Dorsolateral prefrontal cortex (tissue), 120 donors: ENCODE measurements at regions of chr3 and their contacts with region 1.

Region 1: GRCh38 chr3:160027541-160028195 is 39.0 kb downstream of the IL12A start:
- DNase-seq: no peak
- H3K4me3 ChIP-seq: no peak overlapping the region
- H3K27ac ChIP-seq: no peak overlapping the region
- H3K27me3 ChIP-seq: no peaks in the 10 kb centered on the region
- CTCF ChIP-seq: no peak

Region 2: GRCh38 chr3:160343132-160343531 is 315.5 kb after region 1 on chr3:
- intact Hi-C with region 1: loop called in 1 of 2 experiments (anchors 5 kb)
- DNase-seq: no peak
- H3K4me3 ChIP-seq: no peak overlapping the region
- H3K27ac ChIP-seq: no peak overlapping the region
- H3K27me3 ChIP-seq: no peaks in the 10 kb centered on the region
- CTCF ChIP-seq: peak; percentile 14 to 77 (median 56)

Region 3: DNA sequence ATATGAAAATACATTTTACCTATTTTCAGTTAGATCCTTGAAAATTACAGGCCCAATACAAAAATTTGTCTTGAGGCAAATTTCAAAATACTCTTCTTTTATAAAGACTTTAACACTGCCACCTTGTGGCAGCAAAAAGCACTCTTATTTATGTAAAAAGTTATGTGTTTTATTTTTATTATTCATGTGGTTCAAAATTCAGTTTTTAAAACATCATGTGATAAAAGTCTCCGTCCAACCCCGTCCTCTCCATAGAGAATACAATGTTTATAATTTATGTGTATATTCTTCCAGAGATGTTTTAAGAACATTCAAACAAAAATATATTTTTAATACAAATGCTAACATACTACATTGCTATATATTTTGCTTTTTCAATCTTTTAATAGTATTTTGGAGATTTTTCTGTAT is 458.8 kb after region 1 on chr3:
- intact Hi-C with region 1: loop called in 1 of 2 experiments (anchors 5 kb)
- DNase-seq: no peak
- H3K4me3 ChIP-seq: peak overlapping the region in 32 of 59 donors; percentile 14 to 68 (median 48)
- H3K27ac ChIP-seq: peak overlapping the region in 29 of 59 donors; percentile 35 to 86 (median 73)
- H3K27me3 ChIP-seq: no peaks in the 10 kb centered on the region
- CTCF ChIP-seq: peak; percentile 55 to 92 (median 78)